Gastrocnemius medialis (tissue), 4 donors: ENCODE measurements at regions of chr5 and their contacts with region 1.

Region 1: GRCh38 chr5:38447786-38448185 is 108.7 kb downstream of the LIFR start:
- DNase-seq: peak in 1 of 2 donors; percentile 48
- ATAC-seq: peak; percentile 14 to 32
- H3K4me3 ChIP-seq: no peak overlapping the region
- H3K27ac ChIP-seq: peak overlapping the region; percentile 89 to 94 (median 92)
- H3K4me1 ChIP-seq: peaks cover 37 to 39% of the 10 kb centered on the region in 2 donors
- H3K27me3 ChIP-seq: no peaks in the 10 kb centered on the region
- CTCF ChIP-seq: no peak
- POLR2A ChIP-seq: no peak

Region 2: DNA sequence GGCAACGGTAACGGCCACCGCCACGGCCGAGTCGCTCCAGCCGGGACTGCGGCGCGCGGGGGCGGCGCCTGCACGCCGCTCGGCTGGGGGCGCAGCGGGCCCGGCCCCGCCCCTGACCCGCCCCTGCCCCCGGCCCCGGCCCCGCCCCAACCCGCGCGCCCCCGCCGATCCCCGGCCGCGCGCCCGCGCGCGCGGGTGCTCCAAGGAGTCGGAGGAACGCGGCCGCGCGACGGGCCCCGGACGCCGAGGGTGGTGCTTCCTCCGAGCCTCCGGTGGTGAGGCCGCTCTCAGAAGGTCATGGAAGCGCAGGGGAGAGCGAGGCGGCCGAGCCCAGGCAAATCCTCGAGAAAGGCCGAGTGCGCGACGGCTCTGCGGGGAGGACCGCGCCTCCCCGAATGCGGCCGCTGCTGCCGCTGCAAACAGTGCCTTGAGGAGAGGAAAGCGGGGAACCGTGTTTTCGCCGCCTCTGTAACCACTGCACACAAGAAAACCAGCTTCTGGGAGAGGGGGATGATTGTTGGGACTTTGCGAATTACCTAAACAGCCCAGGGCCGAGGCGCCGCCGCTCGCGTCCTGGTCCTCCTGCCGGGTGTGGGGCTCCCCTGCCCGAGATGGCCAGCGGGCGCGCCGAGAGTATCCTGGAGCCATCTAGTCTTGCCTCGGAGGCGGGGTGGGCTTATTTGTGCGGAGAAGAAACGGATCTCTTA is 109.0 kb after region 1 on chr5 and contains the start of gene LIFR:
- in situ Hi-C with region 1: no loop called
- intact Hi-C with region 1: loop called (anchors 2 kb)
- DNase-seq: peak; percentile 59 to 79
- ATAC-seq: peak; percentile 79 to 88
- H3K4me3 ChIP-seq: peak within 1 kb of the TSS; percentile 89 to 94 (median 92)
- H3K27ac ChIP-seq: peak within 1 kb of the TSS; percentile 97 to 99 (median 98)
- H3K4me1 ChIP-seq: peaks cover 19 to 51% of the 10 kb centered on the region in 2 donors
- H3K27me3 ChIP-seq: no peaks in the 10 kb centered on the region
- CTCF ChIP-seq: peak in 2 of 5 experiments; percentile 18 to 25
- POLR2A ChIP-seq: peak; percentile 77 to 86
- total RNA-seq, gene LIFR: 80.0 to 233 (median 89.5) TPM